SK-N-SH (cell line): ENCODE measurements at regions of chr18 and their contacts with region 1.

Region 1: DNA sequence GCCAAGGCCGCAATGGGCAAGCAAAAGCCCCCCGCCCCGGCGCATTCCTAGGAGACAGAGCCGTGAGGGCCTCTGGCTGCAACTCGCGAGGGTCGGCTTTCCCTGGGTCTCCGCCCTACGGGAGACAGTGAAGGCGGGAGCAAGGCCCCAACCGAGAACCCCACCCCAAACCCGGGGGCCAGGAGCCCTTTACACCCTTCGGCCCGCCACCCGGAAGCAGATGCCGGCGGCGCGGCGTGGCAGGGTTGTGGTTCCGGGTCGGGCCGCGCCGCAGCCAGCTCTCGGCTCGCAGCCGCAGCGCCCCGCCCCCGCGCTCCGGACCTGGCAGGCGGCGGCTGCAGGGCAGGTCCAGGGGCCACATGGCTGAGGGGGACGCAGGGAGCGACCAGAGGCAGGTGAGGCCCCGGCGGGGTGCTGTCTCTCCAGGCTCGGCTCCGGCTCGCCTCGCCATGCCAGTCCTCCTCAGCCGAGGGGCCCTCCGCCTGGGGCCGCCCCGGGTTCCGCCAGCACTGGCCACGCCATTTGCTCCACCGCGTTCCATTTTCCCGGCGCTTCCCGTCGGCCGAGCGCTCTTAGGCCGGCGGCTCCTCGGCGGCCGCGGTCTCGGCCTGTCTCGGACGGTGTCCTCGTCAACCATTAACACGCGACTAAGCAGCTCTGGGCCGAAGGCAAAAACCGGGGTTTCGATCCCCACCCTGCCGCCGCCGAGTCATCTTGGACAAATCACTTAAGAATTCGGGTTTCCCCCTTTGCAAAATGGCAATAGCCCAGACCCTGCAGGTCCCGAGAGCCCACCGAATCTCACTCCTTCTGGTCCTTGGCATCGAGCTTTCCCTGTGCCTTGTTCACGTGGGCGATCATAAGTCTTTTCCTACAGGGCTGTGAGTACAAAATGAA is at the start of gene IMPACT:
- DNase-seq: peak; percentile 96
- H3K4me3 ChIP-seq: peak within 1 kb of the TSS; percentile 68 to 88
- H3K27ac ChIP-seq: peak within 1 kb of the TSS; percentile 53 to 92
- H3K4me1 ChIP-seq: peaks cover 0 to 7% of the 10 kb centered on the region in 2 experiments; a peak in 2 of 4 replicates
- H3K27me3 ChIP-seq: no peaks in the 10 kb centered on the region
- CTCF ChIP-seq: no peak
- EP300 ChIP-seq: no peak; a peak in 1 of 4 replicates
- RAD21 ChIP-seq: no peak
- polyA plus RNA-seq, gene IMPACT: 13.0 and 21.5 TPM in 2 replicates

Region 2: GRCh38 chr18:24397694-24398365 is 28.8 kb before region 1 on chr18 and contains the start of gene OSBPL1A:
- CTCF ChIA-PET with region 1: interaction called, 4 read pairs
- POLR2A ChIA-PET with region 1: interaction called, 11 read pairs
- DNase-seq: peak; percentile 99
- H3K4me3 ChIP-seq: peak within 1 kb of the TSS; percentile 87 to 93
- H3K27ac ChIP-seq: peak within 1 kb of the TSS; percentile 54 to 92
- H3K4me1 ChIP-seq: peaks cover 3 to 7% of the 10 kb centered on the region in 2 experiments; a peak in 3 of 4 replicates
- H3K27me3 ChIP-seq: no peaks in the 10 kb centered on the region
- CTCF ChIP-seq: no peak
- EP300 ChIP-seq: 0 out of 4 replicates have a peak, but pooled peaks of 1 of the 2 experiments have one; percentile 14
- RAD21 ChIP-seq: no peak
- polyA plus RNA-seq, gene OSBPL1A: 21.3 and 26.1 TPM in 2 replicates